MCF 10A (cell line): ENCODE measurements at regions of chr2 and their contacts with region 1.

Region 1: GRCh38 chr2:69946351-69947077 is 14.9 kb downstream of the ASPRV1 start:
- DNase-seq: peak; percentile 76
- H3K4me3 Mint-ChIP-seq: peak overlapping the region; percentile 11
- H3K27ac Mint-ChIP-seq: peak overlapping the region; percentile 69
- H3K4me1 Mint-ChIP-seq: peaks cover 39% of the 10 kb centered on the region
- H3K27me3 Mint-ChIP-seq: no peaks in the 10 kb centered on the region
- CTCF ChIP-seq: no peak

Region 2: DNA sequence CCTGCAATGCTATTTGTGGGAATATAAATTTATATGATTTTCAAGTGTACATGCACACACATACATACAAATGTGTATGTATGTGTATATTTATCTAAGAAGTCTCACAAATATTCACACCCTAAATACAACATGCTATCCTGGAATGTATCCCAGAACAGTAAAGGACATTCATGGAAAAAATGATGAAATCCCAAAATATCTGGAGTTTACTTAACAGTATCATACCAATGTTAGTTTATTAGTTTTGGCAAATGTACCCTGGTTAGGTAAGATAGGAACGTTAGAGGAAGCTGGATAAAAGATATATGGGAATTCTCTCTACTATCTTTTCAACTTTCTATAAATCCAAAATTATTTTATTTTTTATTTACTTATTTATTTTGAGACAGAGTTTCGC is 33.9 kb after region 1 on chr2:
- CTCF ChIA-PET with region 1: no interaction called
- POLR2A ChIA-PET with region 1: interaction called, 10 read pairs
- intact Hi-C with region 1: no loop called
- DNase-seq: peak; percentile 73
- H3K4me3 Mint-ChIP-seq: no peak overlapping the region
- H3K27ac Mint-ChIP-seq: no peak overlapping the region
- H3K4me1 Mint-ChIP-seq: peaks cover 6% of the 10 kb centered on the region
- H3K27me3 Mint-ChIP-seq: no peaks in the 10 kb centered on the region
- CTCF ChIP-seq: no peak

Region 3: GRCh38 chr2:69997015-69997830 is 50.7 kb after region 1 on chr2:
- CTCF ChIA-PET with region 1: no interaction called
- POLR2A ChIA-PET with region 1: no interaction called
- intact Hi-C with region 1: loop called (anchors 5 kb)
- DNase-seq: peak; percentile 84
- H3K4me3 Mint-ChIP-seq: peak overlapping the region; percentile 41
- H3K27ac Mint-ChIP-seq: peak overlapping the region; percentile 6
- H3K4me1 Mint-ChIP-seq: peaks cover 18% of the 10 kb centered on the region
- H3K27me3 Mint-ChIP-seq: no peaks in the 10 kb centered on the region
- CTCF ChIP-seq: no peak